Gastrocnemius medialis (tissue), 4 donors: ENCODE measurements at regions of chr5 and their contacts with region 1.

Region 1: GRCh38 chr5:116574367-116575325 is at the start of gene SEMA6A:
- DNase-seq: peak; percentile 70 to 78
- ATAC-seq: peak; percentile 74
- H3K4me3 ChIP-seq: peak within 1 kb of the TSS; percentile 50 to 67 (median 60)
- H3K27ac ChIP-seq: peak within 1 kb of the TSS; percentile 60 to 77 (median 72)
- H3K4me1 ChIP-seq: peaks cover 13 to 30% of the 10 kb centered on the region in 2 donors
- H3K27me3 ChIP-seq: peaks cover 48 to 53% (median 51%) of the 10 kb centered on the region in 3 donors
- CTCF ChIP-seq: peak in 2 of 5 experiments; percentile 11 to 31
- POLR2A ChIP-seq: peak; percentile 44 to 71
- total RNA-seq, gene SEMA6A: 2.5 to 6.5 (median 2.7) TPM

Region 2: DNA sequence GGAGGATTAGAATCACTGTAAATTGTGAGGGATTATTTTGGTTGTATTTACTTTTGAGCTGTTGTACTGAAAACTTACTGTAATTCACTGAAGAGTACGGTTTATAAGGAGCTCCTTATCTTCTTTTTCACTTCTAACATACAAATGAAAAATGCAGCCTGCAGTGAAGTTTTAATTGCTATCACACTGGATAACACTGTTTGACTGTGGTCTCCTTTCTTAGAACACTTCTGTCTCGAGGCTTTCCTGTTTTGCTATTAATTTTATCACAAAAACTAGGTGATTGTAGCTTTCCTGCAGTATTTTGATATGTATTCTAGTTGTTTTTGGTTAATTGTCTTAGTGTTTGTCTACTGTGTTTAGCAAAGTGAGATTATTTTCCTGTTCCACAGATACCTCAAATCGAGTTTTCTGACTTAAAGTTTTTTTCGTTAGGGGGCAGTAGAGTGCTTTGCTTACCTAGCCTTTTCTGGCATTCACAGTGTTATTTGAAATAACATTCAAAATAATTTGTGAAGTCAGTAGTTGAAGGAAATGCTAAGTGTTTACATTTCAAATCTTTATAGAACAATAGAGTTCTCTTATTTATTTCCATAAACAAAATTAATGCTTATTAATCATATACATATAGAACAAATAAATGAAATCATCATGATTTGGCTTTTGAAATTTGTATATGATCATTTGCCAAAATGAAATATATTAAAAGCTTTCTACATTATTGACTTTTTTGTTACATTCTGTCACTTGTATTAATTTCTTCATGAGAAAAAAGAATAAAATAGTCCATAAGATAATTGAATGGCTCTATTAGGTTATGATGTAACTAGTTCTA is 436.9 kb before region 1 on chr5:
- in situ Hi-C with region 1: loop called in 1 of 4 experiments (anchors 25 kb)
- intact Hi-C with region 1: loop called (anchors 10 kb)
- DNase-seq: no peak
- ATAC-seq: no peak
- H3K4me3 ChIP-seq: no peak overlapping the region
- H3K27ac ChIP-seq: no peak overlapping the region
- H3K4me1 ChIP-seq: peaks cover 4 to 6% of the 10 kb centered on the region in 2 donors
- H3K27me3 ChIP-seq: no peaks in the 10 kb centered on the region
- CTCF ChIP-seq: peak; percentile 43 to 83 (median 75)
- POLR2A ChIP-seq: no peak

Region 3: GRCh38 chr5:116197278-116197677 is 377.4 kb before region 1 on chr5:
- in situ Hi-C with region 1: no loop called
- intact Hi-C with region 1: no loop called
- DNase-seq: no peak
- ATAC-seq: no peak
- H3K4me3 ChIP-seq: no peak overlapping the region
- H3K27ac ChIP-seq: no peak overlapping the region
- H3K4me1 ChIP-seq: no peaks in the 10 kb centered on the region
- H3K27me3 ChIP-seq: no peaks in the 10 kb centered on the region
- CTCF ChIP-seq: no peak
- POLR2A ChIP-seq: no peak

Region 4: GRCh38 chr5:116521173-116521872 is 53.3 kb before region 1 on chr5:
- in situ Hi-C with region 1: no loop called
- intact Hi-C with region 1: no loop called
- DNase-seq: peak in 1 of 2 donors; percentile 21
- ATAC-seq: peak; percentile 27 to 61
- H3K4me3 ChIP-seq: no peak overlapping the region
- H3K27ac ChIP-seq: no peak overlapping the region
- H3K4me1 ChIP-seq: peaks cover 0 to 19% of the 10 kb centered on the region in 2 donors
- H3K27me3 ChIP-seq: no peaks in the 10 kb centered on the region
- CTCF ChIP-seq: no peak
- POLR2A ChIP-seq: no peak

Region 5: DNA sequence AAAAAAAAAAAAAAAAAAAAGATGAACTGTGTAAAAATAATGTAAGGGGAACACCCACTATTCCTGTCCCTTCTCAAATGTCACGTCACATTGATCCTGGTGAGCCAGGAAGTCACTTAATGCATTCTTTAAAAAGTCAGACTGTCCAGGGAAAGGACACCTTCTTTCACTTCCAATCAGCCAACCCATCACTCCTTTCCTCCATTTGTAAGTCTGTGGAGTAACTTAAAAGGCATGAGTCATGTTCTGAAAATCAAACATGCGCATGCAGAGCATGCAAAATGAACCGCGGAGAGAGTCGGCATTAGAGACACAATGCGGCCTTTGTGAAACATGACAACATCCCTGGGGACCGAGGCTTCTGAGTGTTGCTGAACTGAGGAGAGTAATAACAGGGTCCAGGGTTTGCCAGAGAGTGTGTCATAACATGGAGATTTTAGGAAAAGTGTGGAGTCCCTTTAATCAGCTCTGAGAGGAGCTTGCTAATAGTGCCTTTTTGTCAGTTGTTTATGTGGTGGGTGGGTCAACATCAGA is 77.6 kb after region 1 on chr5:
- in situ Hi-C with region 1: no loop called
- intact Hi-C with region 1: loop called (anchors 2 kb)
- DNase-seq: peak; percentile 51 to 71
- ATAC-seq: peak; percentile 77 to 83
- H3K4me3 ChIP-seq: no peak overlapping the region
- H3K27ac ChIP-seq: peak overlapping the region in 2 of 4 donors; percentile 24 to 56
- H3K4me1 ChIP-seq: peaks cover 4 to 6% of the 10 kb centered on the region in 2 donors
- H3K27me3 ChIP-seq: peaks cover 0 to 4% (median 0%) of the 10 kb centered on the region in 3 donors
- CTCF ChIP-seq: no peak
- POLR2A ChIP-seq: no peak

Region 6: GRCh38 chr5:116947691-116948528 is 373.3 kb after region 1 on chr5:
- in situ Hi-C with region 1: no loop called
- intact Hi-C with region 1: loop called (anchors 2 kb)
- DNase-seq: no peak
- ATAC-seq: no peak
- H3K4me3 ChIP-seq: no peak overlapping the region
- H3K27ac ChIP-seq: no peak overlapping the region
- H3K4me1 ChIP-seq: no peaks in the 10 kb centered on the region
- H3K27me3 ChIP-seq: no peaks in the 10 kb centered on the region
- CTCF ChIP-seq: peak in 4 of 5 experiments; percentile 36 to 59 (median 44)
- POLR2A ChIP-seq: no peak